ENCODE measurements at regions of chr2 and their contacts with region 1.

Region 1: GRCh38 chr2:170973492-170974303 is 44.6 kb downstream of the GORASP2 start:
- DNase-seq: peak; percentile 9
- H3K4me3 ChIP-seq: peak overlapping the region; percentile 51 to 69 (median 65)
- H3K27ac ChIP-seq: peak overlapping the region; percentile 16
- H3K4me1 ChIP-seq: peaks cover 15% of the 10 kb centered on the region
- H3K27me3 ChIP-seq: no peaks in the 10 kb centered on the region
- CTCF ChIP-seq: peak; percentile 68 to 75

Region 2: DNA sequence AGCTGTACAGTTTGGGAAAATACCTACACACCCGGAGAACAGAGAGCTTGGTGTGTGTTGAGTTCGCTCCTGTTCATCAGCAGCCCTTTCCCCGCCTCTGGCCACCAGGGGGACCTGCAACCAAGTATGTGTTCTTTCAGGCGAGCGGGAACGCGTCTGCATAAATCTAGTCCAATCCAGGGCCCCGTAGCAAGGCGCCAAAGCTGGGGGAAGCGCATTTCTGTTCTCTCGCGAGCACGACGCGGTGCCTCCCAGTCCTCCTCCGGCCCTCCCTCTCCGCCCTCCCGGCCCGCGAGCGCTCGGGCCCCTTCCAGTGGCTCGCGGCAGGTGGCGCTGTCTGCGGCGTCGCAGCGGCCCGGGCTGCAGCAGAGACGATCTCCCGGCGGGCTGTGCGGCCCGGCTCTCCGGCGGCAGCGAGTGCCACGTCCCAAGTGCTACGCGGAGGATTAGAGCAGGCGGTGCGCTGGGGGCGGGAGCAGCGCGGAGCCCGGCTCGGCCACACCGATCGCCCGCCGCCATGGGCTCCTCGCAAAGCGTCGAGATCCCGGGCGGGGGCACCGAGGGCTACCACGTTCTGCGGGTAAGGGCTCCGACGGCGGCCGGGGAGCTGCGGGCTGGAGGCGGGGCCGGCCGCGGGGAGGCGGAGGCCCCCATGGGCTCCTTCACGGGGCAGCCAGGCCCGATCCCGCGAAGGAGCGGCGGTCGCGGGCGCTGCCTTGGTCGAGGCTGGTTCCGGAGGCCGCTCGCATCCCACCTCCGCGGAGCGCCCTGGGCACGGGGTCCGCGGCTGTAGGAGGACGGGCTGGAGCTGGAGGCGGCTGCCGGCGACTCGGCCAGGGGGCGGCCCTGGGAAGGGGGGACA is 44.6 kb before region 1 on chr2 and contains the start of gene GORASP2:
- CTCF ChIA-PET with region 1: interaction called, 3 read pairs
- dilution Hi-C with region 1: no loop called
- in situ Hi-C with region 1: no loop called
- intact Hi-C with region 1: loop called (anchors 2 kb)
- DNase-seq: peak; percentile 99
- H3K4me3 ChIP-seq: peak within 1 kb of the TSS; percentile 54 to 86 (median 85)
- H3K27ac ChIP-seq: peak within 1 kb of the TSS; percentile 89
- H3K4me1 ChIP-seq: peaks cover 14% of the 10 kb centered on the region
- H3K27me3 ChIP-seq: no peaks in the 10 kb centered on the region
- CTCF ChIP-seq: peak; percentile 85
- total RNA-seq, gene GORASP2: 63.3 to 94.9 TPM

Region 3: GRCh38 chr2:171244970-171245782 is 271.5 kb after region 1 on chr2:
- CTCF ChIA-PET with region 1: no interaction called
- dilution Hi-C with region 1: no loop called
- in situ Hi-C with region 1: no loop called
- intact Hi-C with region 1: loop called (anchors 1 kb)
- DNase-seq: peak; percentile 37
- H3K4me3 ChIP-seq: no peak overlapping the region
- H3K27ac ChIP-seq: no peak overlapping the region
- H3K4me1 ChIP-seq: peaks cover 5% of the 10 kb centered on the region
- H3K27me3 ChIP-seq: no peaks in the 10 kb centered on the region
- CTCF ChIP-seq: peak; percentile 9 to 35

Region 4: GRCh38 chr2:171271971-171272436 is 298.3 kb after region 1 on chr2:
- CTCF ChIA-PET with region 1: no interaction called
- dilution Hi-C with region 1: no loop called
- in situ Hi-C with region 1: no loop called
- intact Hi-C with region 1: loop called (anchors 1 kb)
- DNase-seq: peak; percentile 98
- H3K4me3 ChIP-seq: no peak overlapping the region
- H3K27ac ChIP-seq: peak overlapping the region; percentile 50
- H3K4me1 ChIP-seq: peaks cover 17% of the 10 kb centered on the region
- H3K27me3 ChIP-seq: no peaks in the 10 kb centered on the region
- CTCF ChIP-seq: no peak

Region 5: GRCh38 chr2:171991027-171991426 is 1017.3 kb after region 1 on chr2:
- CTCF ChIA-PET with region 1: no interaction called
- dilution Hi-C with region 1: no loop called
- in situ Hi-C with region 1: no loop called
- intact Hi-C with region 1: no loop called
- DNase-seq: no peak
- H3K4me3 ChIP-seq: no peak overlapping the region
- H3K27ac ChIP-seq: no peak overlapping the region
- H3K4me1 ChIP-seq: no peaks in the 10 kb centered on the region
- H3K27me3 ChIP-seq: no peaks in the 10 kb centered on the region
- CTCF ChIP-seq: no peak